Motor neuron (in vitro differentiated cells): ENCODE measurements at regions of chr9 and their contacts with region 1.

Region 1: DNA sequence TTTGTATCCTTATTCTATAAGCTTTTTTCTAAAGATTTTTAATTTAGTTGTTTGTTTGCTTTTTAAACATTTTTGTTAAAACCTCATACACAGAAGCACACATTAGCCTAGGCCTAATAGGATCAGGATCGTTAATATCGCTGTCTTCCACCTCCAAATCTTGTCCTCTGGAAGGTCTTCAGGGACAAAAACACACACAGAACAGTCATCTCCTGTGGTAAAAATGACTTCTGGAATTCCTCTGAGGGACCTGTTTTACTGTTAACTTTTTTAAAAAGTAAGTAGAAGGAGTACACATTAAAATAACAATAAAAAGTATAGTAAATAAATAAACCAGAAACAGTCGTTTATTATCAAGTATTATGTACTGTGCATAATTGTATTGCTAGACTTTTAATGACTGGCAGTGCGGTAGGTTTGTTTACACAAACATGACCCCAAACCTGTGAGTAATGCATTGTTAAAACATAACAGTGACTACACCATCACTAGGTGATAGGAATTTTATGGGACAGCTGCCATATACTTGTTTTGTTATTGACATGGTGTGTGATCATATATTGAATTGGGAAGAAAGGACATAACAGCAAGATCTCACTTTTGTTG is 109.6 kb downstream of the ZCCHC7 start:
- ATAC-seq: no peak
- H3K4me3 ChIP-seq: no peak overlapping the region
- H3K27ac ChIP-seq: no peak overlapping the region
- H3K4me1 ChIP-seq: no peaks in the 10 kb centered on the region

Region 2: DNA sequence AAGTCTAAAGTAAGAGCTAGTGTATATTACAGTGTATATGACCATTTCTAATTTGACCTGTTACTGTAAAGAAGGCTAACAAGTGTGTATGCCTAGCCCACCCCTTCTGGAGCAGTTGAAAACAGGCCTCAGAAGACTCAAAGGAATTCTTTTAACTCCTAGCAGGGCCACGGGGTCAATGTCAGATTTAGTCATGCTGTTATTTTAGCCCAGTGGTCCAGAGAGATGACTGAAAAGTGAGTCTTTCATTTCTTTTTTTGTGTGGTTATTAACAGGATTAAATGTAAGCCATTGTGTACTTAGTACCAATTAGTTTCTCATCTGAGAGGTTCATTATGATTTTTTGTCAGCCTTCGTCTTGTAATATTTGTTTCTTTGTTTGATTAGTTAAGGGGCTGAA is 85.2 kb before region 1 on chr9:
- in situ Hi-C with region 1: loop called in 1 of 9 experiments (anchors 25 kb)
- ATAC-seq: peak in 1 of 8 experiments; percentile 21
- H3K4me3 ChIP-seq: no peak overlapping the region
- H3K27ac ChIP-seq: no peak overlapping the region
- H3K4me1 ChIP-seq: peaks cover 0 to 7% of the 10 kb centered on the region in 2 donors